HEK293 (cell line): ENCODE measurements at regions of chr11 and their contacts with region 1.

Region 1: DNA sequence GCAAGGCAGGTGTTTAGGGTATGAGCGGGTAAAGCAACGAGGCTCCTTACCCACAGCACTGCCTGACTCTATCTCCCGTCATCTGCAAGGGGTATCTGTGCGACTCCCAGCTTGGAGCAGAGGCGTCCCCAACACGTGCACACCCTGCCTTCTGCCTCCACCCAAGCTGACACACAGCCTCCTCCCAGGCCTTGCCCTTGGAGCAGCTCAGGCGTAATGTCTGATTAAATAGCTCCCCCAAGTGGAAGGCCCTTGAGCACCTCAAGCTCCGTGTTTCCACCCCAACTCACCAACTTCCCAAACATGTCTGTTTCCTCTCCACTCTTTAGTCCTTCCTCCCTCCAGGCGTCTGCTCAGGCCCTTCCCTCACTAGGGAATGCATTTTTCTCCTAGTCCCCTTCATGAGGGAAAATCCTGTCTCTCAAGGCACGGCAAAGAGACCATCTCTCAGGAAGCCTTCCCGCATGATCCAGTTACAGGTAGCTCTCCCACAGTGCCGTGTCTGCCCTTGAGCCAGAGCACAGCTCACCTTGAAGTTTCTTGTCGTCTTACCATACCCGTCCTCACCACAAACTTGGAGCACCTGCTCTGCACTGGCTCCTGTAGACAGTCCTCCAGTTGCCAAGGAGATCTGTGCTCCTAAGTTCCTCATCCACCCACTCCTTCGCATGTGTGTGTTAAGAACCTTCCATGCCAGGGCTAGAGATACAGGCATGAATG is 15.8 kb downstream of the CYB5R2 start:
- H3K4me3 ChIP-seq: no peak overlapping the region
- H3K27ac ChIP-seq: no peak overlapping the region
- H3K4me1 ChIP-seq: no peaks in the 10 kb centered on the region
- CTCF ChIP-seq: peak; percentile 82

Region 2: DNA sequence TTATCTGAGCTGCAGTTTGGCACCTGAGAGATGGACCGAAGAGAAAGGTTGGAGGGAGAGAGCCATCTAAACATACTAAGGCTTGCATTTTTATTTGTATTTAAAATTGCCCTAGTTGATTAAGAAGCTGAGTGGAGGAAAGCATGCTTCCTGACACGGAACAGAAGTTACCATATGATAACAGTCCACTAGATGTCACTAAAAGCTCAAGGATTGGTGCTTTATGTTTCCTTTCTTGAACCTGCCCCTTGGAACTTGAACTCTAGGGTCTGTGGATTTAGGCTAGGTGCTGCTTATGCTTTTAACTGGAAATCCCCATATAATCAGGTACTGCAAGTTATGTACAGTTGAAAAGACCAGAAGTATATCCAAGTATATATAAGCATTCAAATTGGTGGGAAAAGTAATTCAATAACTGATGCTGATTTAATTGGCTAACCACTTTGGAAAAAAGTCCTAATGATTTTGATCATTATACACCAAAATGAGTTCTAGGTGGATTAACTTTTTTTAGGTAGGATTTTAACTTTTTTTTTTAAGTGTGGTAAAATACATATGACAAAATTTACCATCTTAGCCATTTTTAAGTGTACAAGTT is 559.1 kb before region 1 on chr11:
- CTCF ChIA-PET with region 1: interaction called, 11 read pairs
- POLR2A ChIA-PET with region 1: no interaction called
- H3K4me3 ChIP-seq: no peak overlapping the region
- H3K27ac ChIP-seq: no peak overlapping the region
- H3K4me1 ChIP-seq: no peaks in the 10 kb centered on the region
- CTCF ChIP-seq: no peak

Region 3: DNA sequence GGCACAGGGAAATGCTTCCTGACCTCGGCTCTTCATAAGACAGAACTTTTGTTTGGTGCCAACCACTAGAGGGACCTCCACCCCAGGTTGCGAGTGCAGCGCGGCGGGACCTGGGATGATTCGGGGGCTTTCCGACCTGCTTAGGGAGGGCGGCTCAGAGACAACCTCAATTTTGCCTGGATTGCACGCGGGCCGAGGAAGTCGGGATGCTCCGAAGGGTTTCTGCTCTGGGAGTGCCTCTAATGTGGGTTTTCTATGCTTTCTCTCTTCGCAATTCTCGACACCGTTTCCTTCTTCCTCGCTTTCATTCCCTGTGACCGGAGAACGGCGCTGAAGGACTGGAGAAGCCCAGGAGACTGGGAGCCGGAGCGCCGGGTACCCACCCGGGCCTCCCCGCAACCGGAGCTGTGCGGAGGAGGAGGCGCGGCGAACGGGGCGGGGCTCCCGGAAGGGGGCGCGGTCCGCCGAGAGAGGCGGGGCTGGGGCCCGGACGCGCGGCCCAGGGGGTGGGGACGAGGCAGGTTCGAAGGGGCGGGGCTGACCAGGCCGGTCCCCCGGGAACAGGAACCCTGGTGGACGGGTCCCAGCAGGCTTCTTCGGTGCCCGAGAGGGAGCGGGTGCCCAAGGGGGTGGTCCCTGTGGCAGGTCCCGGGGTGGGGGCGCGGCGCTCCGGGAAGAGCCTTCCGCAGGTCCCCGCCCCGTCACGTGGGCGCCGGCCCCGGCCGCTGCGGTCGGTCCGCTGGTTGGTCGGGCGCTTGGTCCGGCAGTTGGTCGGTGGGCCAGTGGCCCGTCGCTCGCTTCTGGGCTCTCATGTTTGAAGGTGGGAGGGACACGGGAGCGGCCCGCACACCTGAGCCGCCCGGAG is 144.0 kb before region 1 on chr11 and contains the start of gene PPFIBP2:
- CTCF ChIA-PET with region 1: interaction called, 15 read pairs
- POLR2A ChIA-PET with region 1: no interaction called
- H3K4me3 ChIP-seq: peak within 1 kb of the TSS; percentile 82
- H3K27ac ChIP-seq: no peak within 1 kb of the TSS
- H3K4me1 ChIP-seq: no peaks in the 10 kb centered on the region
- CTCF ChIP-seq: peak; percentile 54

Region 4: GRCh38 chr11:7548659-7549274 is 108.7 kb before region 1 on chr11:
- CTCF ChIA-PET with region 1: interaction called, 10 read pairs
- POLR2A ChIA-PET with region 1: no interaction called
- H3K4me3 ChIP-seq: no peak overlapping the region
- H3K27ac ChIP-seq: no peak overlapping the region
- H3K4me1 ChIP-seq: no peaks in the 10 kb centered on the region
- CTCF ChIP-seq: 0 out of 2 replicates have a peak, but pooled peaks have one; percentile 16